Thyroid gland (tissue), 4 donors: ENCODE measurements at regions of chr19 and their contacts with region 1.

Region 1: GRCh38 chr19:11435058-11435832 is at the starts of genes ODAD3 and PRKCSH:
- DNase-seq: peak; percentile 100
- H3K4me3 ChIP-seq: peak within 1 kb of the TSS; percentile 15 to 60 (median 51)
- H3K27ac ChIP-seq: peak within 1 kb of the TSS; percentile 16 to 80 (median 56)
- H3K4me1 ChIP-seq: peaks cover 15 to 16% of the 10 kb centered on the region in 2 donors
- H3K27me3 ChIP-seq: no peaks in the 10 kb centered on the region
- CTCF ChIP-seq: peak; percentile 75 to 99 (median 96)
- POLR2A ChIP-seq: peak in 1 of 2 donors; percentile 66
- total RNA-seq, gene ODAD3: 0.96 to 6.8 (median 3.8) TPM
- total RNA-seq, gene PRKCSH: 142 to 198 (median 178) TPM

Region 2: DNA sequence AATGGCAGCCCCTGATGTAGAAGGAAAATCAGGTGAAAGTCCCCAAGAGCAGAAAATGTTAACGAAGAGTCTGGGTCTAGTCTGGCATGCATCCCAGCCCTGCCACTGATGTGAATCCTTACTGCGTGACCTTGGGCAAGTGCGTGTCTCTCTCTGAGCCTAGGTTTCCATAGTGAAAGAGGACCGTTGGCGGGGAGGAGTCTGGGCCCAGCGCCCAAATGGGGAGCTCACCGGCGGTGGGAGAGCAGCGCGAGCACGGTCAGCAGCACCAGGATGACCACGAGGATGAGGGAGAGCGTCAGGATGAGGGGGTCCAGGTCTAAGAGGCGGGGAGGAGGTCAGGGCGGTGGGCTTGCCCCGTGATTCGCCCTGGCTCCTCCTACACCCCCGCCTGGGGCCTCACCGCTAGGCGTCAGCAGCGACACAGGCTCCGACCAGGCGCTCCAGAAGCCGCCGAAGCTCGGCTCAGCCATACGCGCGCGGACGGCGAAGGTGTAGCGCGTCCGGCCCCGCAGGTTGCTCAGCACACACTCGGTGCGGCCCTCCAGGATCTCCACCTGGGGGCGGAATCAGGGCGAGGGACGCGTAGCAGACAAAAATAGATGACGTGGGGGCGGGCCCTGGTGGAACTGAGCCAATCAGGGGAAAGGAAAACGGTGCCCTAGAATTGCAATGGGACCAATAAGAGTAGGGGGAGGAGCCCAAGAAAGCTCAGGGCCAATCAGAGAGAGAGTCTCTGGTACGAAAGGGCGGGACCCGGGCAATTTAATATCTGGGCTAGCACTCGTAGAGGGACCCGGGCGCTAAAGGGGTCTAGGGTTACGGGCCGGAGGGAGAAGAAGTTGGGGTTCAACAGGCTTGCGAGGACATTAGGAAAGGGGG is 54.4 kb before region 1 on chr19:
- intact Hi-C with region 1: loop called (anchors 5 kb)
- DNase-seq: peak; percentile 98
- H3K4me3 ChIP-seq: peak overlapping the region; percentile 22 to 44 (median 34)
- H3K27ac ChIP-seq: peak overlapping the region; percentile 78 to 95 (median 86)
- H3K4me1 ChIP-seq: peaks cover 26 to 72% of the 10 kb centered on the region in 2 donors
- H3K27me3 ChIP-seq: no peaks in the 10 kb centered on the region
- CTCF ChIP-seq: peak; percentile 40 to 90 (median 76)
- POLR2A ChIP-seq: peak in 1 of 2 donors; percentile 96

Region 3: DNA sequence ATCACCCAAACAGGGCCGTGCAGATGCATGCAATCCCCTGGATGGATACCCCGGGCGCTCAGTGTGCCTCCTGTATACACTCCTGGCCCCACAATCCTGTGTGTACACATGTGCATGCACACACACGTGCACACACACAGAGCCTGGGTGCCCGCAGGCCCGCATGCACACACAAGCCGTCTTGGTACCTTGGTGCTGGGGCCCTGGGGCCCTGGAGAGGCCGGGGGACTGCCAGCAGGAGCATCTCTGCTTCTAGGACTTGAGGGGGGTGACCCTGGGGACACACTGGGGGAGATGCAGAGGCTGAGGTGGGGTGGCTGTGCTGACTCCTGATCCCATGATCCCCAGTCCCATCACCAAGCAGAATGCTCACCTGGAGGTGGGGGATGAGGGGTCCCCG is 35.6 kb before region 1 on chr19:
- intact Hi-C with region 1: no loop called
- DNase-seq: no peak
- H3K4me3 ChIP-seq: no peak overlapping the region
- H3K27ac ChIP-seq: no peak overlapping the region
- H3K4me1 ChIP-seq: no peaks in the 10 kb centered on the region
- H3K27me3 ChIP-seq: no peaks in the 10 kb centered on the region
- CTCF ChIP-seq: no peak
- POLR2A ChIP-seq: no peak